Activated T-helper 1 cell treated with anti-CD3 and anti-CD28 coated beads, Interleukin-12 subunit alpha, Interleukin-12 subunit beta, Interleukin-2, Interleukin-4 antibody, amounts not matched to agents 30 ng/mL and 10 ng/mL and 1 ng/mL, durations not matched to agents 14 hours and 24 hours and 36 hours (primary cell): ENCODE measurements at regions of chr6 and their contacts with region 1.

Region 1: DNA sequence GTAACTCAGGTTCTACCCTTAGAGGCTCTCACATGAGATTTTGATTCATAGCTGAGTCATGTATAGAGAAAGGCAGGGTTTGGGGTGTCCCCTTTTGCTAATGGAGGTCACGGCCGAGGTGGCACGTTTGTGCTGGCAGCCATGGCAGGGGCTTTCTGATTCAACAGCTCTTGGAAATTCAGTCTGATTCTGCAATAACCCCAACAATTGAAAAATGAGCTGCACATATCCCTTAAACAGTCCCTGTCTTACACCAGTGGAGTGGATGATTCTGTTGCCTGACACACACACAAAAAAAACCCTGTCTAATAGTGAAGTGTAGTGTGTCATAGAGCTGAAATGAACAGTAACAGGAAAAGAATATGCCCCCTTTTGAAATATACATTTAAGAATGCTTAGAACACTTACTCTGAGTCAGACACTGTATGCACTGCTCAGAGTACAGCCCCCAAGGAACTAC is 40.4 kb upstream of the ARG1 start:
- DNase-seq: no peak
- H3K4me3 Mint-ChIP-seq: no peak overlapping the region
- H3K27ac Mint-ChIP-seq: peak overlapping the region; percentile 24
- H3K4me1 Mint-ChIP-seq: peaks cover 39% of the 10 kb centered on the region
- H3K27me3 Mint-ChIP-seq: peaks cover 3% of the 10 kb centered on the region

Region 2: GRCh38 chr6:130893277-130893676 is 639.3 kb before region 1 on chr6:
- intact Hi-C with region 1: no loop called
- DNase-seq: no peak
- H3K4me3 Mint-ChIP-seq: no peak overlapping the region
- H3K27ac Mint-ChIP-seq: no peak overlapping the region
- H3K4me1 Mint-ChIP-seq: no peaks in the 10 kb centered on the region
- H3K27me3 Mint-ChIP-seq: no peaks in the 10 kb centered on the region

Region 3: DNA sequence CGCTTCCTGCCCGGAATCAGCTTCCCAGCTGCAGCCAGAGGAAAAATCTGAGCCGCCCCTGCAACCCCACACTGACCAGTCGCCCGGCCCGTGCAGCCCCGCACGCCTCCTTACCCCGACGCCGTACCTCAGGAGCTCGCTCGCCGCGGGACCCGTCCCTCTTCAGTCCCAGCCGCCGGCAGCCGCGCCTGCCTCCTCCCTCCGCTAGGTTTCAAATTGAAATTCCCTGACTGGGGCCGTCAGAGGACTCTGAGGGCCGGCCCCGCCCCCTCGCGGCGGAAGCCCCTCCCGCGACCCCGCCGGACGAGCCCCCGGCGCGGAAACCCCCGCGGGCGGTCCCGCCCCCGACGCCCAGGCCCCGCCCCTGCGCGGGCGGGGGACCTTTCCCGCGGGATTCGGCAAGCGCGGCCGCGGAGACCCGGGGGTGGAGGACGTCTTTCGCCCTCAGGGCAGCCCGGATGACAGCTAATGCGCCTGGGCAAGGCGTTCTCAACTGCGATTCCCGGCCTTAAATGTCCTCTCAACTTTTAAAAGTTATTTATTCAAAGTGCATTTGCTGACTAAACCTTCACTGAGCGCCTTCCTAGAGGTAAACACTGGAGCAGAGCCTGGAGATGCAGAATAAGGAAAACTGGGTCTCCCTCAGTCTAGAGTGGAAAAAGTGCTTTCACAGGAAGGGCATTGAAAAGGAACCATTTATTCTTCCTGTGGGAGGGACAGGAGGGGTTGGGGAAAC is 469.4 kb before region 1 on chr6 and contains the start of gene EPB41L2:
- intact Hi-C with region 1: loop called (anchors 5 kb)
- DNase-seq: peak; percentile 76
- H3K4me3 Mint-ChIP-seq: peak within 1 kb of the TSS; percentile 81
- H3K27ac Mint-ChIP-seq: peak within 1 kb of the TSS; percentile 14
- H3K4me1 Mint-ChIP-seq: peaks cover 21% of the 10 kb centered on the region
- H3K27me3 Mint-ChIP-seq: peaks cover 15% of the 10 kb centered on the region
- total RNA-seq, gene EPB41L2: 17.7 and 18.7 TPM in 2 replicates

Region 4: DNA sequence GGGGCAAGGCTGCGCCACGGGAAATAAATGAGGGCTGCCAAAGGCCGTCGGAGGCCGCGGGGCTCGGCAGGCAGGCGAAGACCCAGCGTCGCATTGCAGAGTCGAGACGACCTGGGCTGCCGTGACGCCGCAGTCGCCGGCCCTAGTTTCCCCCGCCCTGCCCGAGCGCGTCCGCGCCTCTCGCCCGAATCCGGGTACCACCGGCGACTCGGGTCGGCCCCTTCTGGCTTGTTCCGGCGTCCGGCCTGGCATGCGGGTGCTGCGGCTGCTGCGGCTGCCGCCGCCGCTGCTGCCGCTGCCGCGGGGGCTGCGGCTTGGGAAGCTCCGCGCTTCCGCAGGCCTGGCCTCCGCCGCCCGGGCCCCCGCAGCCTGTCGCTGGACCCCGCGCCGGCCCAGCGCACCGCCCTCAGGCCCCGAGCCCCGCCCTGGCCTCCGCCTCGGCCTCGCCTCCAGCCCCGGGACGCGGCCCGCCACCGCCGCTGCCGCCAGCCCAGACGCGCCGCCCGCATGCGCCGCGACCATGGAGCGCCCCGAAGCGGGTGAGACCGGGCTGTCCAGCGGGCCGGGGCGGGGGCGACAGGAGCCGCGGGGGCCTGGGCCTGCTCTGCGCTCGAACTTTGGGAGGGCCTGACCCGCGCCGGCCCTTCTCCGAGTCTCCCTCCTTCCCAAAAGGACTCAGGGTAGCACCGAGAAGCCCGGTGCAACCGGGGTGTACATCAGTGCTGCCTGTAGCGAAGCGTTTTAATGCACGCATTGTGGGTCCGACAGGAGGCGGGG is 397.2 kb before region 1 on chr6 and contains the start of gene AKAP7:
- intact Hi-C with region 1: loop called (anchors 2 kb)
- DNase-seq: peak; percentile 39
- H3K4me3 Mint-ChIP-seq: peak within 1 kb of the TSS; percentile 90
- H3K27ac Mint-ChIP-seq: peak within 1 kb of the TSS; percentile 93
- H3K4me1 Mint-ChIP-seq: peaks cover 18% of the 10 kb centered on the region
- H3K27me3 Mint-ChIP-seq: peaks cover 14% of the 10 kb centered on the region
- total RNA-seq, gene AKAP7: 3.4 and 3.8 TPM in 2 replicates

Region 5: GRCh38 chr6:131199568-131200272 is 332.9 kb before region 1 on chr6:
- intact Hi-C with region 1: loop called (anchors 1 kb)
- DNase-seq: peak; percentile 71
- H3K4me3 Mint-ChIP-seq: peak overlapping the region; percentile 74
- H3K27ac Mint-ChIP-seq: peak overlapping the region; percentile 90
- H3K4me1 Mint-ChIP-seq: peaks cover 55% of the 10 kb centered on the region
- H3K27me3 Mint-ChIP-seq: peaks cover 3% of the 10 kb centered on the region

Region 6: GRCh38 chr6:131519670-131520436 is 12.8 kb before region 1 on chr6:
- intact Hi-C with region 1: loop called (anchors 1 kb)
- DNase-seq: peak; percentile 27
- H3K4me3 Mint-ChIP-seq: no peak overlapping the region
- H3K27ac Mint-ChIP-seq: no peak overlapping the region
- H3K4me1 Mint-ChIP-seq: peaks cover 14% of the 10 kb centered on the region
- H3K27me3 Mint-ChIP-seq: peaks cover 10% of the 10 kb centered on the region

Region 7: DNA sequence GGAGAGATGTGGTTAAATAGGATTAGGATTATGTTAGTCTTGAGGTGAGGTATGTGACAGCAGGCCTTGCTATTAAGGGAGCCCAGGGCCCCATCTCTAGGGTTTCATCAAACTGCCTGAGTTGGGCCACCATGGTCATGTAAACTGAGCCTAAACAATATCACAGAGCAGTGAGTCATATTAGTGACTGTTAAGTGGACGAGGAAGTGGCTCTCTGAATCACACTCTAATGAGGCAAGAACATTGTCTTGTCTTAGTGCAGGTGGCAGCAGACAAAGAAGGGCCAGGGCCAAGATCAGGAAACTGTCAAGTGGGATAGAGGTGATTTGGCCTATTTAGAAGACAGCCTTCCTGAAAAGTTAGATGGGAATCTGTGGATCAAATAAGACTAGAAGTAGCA is 127.6 kb after region 1 on chr6:
- intact Hi-C with region 1: no loop called
- DNase-seq: no peak
- H3K4me3 Mint-ChIP-seq: no peak overlapping the region
- H3K27ac Mint-ChIP-seq: no peak overlapping the region
- H3K4me1 Mint-ChIP-seq: no peaks in the 10 kb centered on the region
- H3K27me3 Mint-ChIP-seq: no peaks in the 10 kb centered on the region